Mammary epithelial cell (primary cell): ENCODE measurements at regions of chr7 and their contacts with region 1.

Region 1: GRCh38 chr7:93374345-93374940 is 142.3 kb downstream of the VPS50 start:
- DNase-seq: peak; percentile 20
- H3K4me3 ChIP-seq: no peak overlapping the region
- H3K27ac ChIP-seq: no peak overlapping the region
- H3K4me1 ChIP-seq: no peaks in the 10 kb centered on the region
- H3K27me3 ChIP-seq: peaks cover 2% of the 10 kb centered on the region
- CTCF ChIP-seq: peak; percentile 84 to 92

Region 2: DNA sequence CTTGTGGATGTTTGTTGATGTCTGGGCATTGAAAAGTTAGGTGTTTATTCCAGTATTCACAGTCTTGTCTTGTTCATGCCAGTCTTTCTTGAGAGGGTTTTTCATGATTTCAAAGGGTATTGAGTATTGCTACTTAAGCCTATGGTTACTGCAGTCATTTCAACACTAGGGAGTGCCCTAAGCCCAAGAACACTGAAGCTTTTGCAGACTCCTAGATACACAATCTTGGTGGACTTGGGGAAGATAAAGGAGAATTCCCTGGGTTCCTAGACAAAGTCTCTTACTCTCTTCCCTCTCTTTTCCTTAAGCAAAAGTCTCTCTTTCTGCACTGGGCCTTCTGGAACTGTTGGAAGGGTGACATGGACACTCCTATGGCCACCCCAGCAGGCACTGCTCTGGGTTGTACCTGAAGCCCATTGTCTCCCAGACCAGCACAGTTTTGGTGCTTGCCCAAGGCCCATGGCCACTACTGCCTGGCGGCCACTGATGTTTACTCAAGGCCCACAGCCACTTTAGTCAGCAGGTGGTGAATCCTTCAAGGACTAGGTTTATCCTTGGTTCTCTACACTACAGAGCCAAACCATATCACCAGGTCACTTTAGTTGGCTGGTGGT is 281.6 kb before region 1 on chr7:
- CTCF ChIA-PET with region 1: no interaction called
- dilution Hi-C with region 1: no loop called
- in situ Hi-C with region 1: no loop called
- intact Hi-C with region 1: loop called (anchors 10 kb)
- DNase-seq: peak; percentile 38
- H3K4me3 ChIP-seq: no peak overlapping the region
- H3K27ac ChIP-seq: no peak overlapping the region
- H3K4me1 ChIP-seq: no peaks in the 10 kb centered on the region
- H3K27me3 ChIP-seq: peaks cover 2% of the 10 kb centered on the region
- CTCF ChIP-seq: peak; percentile 62 to 69

Region 3: DNA sequence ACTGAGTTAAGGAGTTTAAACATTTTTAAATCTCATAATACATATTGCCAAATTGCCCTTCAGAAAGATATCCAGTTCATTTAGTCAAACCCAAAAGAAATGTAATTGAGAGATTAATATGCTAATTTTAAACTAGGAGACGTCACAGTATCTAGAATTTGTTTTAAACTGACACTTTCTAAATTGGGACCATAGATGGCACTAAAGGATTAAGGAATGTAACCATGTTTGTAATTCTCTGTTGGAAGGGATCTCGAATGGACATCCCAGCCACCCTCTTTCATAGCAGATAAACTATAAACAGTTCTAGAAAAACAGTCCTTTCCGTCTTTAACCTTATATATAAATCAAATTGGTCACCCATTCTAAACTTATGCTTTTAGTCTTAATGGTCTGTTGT is 196.2 kb before region 1 on chr7:
- CTCF ChIA-PET with region 1: no interaction called
- dilution Hi-C with region 1: no loop called
- in situ Hi-C with region 1: no loop called
- intact Hi-C with region 1: loop called (anchors 2 kb)
- DNase-seq: no peak
- H3K4me3 ChIP-seq: no peak overlapping the region
- H3K27ac ChIP-seq: no peak overlapping the region
- H3K4me1 ChIP-seq: no peaks in the 10 kb centered on the region
- H3K27me3 ChIP-seq: peaks cover 6% of the 10 kb centered on the region
- CTCF ChIP-seq: peak; percentile 34 to 40

Region 4: DNA sequence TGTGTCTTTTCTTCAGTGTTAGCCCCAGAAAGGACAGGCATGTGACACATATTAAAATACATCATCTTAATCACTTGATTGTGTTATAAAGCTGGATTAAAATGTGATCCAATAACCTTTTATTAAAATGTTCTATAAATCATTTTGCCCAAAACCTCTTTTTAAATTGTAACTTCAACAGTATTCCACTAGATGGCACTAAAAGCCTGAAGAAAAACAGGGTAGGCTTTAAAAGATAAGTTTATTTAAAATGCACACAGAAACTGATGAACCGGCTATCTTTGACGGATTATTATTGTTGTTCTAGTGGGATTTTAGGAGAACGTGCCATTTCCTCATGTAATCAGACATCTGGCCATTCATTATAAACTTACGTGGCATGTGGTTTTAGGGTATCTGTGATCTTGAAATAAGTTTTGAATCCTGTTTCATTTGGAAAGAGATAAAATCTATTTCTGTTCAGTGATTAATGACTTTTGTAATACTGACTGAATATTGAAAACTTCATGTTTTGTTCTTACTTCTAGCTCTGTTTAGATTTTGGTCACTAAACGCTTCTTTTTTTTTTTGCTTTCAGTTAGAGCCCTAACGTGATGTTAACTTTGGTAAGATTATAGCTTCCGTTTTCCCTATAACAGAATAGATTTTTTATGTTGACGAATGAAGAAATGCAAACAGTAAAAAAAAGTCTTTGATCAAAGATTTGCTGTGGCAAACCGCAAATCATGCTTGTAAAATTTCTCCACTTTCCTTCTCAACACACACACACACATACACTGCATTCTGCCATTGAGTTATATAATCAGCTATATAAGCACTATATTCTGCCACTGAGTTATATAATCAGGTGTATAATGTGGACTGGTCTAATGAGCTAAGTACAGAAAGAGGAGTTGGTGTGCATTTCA is 128.7 kb before region 1 on chr7:
- CTCF ChIA-PET with region 1: interaction called, 3 read pairs
- dilution Hi-C with region 1: no loop called
- in situ Hi-C with region 1: loop called in 1 of 2 experiments (anchors 25 kb)
- intact Hi-C with region 1: loop called (anchors 1 kb)
- DNase-seq: peak; percentile 6
- H3K4me3 ChIP-seq: no peak overlapping the region
- H3K27ac ChIP-seq: no peak overlapping the region
- H3K4me1 ChIP-seq: no peaks in the 10 kb centered on the region
- H3K27me3 ChIP-seq: no peaks in the 10 kb centered on the region
- CTCF ChIP-seq: peak; percentile 46 to 52

Region 5: GRCh38 chr7:93359520-93360198 is 14.8 kb before region 1 on chr7:
- CTCF ChIA-PET with region 1: interaction called, 13 read pairs
- dilution Hi-C with region 1: no loop called
- in situ Hi-C with region 1: no loop called
- intact Hi-C with region 1: no loop called
- DNase-seq: no peak
- H3K4me3 ChIP-seq: no peak overlapping the region
- H3K27ac ChIP-seq: no peak overlapping the region
- H3K4me1 ChIP-seq: no peaks in the 10 kb centered on the region
- H3K27me3 ChIP-seq: no peaks in the 10 kb centered on the region
- CTCF ChIP-seq: no peak

Region 6: DNA sequence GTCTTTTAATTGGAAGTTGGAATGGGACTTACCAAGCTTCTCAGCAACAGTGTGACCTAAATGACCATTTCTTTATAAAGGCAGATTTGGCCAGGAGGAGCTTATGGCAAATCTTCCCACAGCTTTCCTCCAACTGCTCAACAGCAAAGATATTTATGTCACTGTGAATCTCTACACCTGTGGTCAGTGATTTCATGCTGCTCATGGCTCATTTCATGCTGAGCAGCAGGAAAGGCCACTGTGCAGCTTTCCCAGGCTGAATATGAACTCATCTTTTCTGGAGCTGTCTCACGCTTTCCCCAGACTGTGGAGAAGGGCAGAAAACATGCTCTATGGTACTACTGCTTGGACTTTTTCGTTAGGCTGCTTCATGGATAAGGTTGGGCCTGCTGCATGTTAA is 170.2 kb after region 1 on chr7:
- CTCF ChIA-PET with region 1: no interaction called
- dilution Hi-C with region 1: no loop called
- in situ Hi-C with region 1: no loop called
- intact Hi-C with region 1: loop called (anchors 5 kb)
- DNase-seq: no peak
- H3K4me3 ChIP-seq: no peak overlapping the region
- H3K27ac ChIP-seq: no peak overlapping the region
- H3K4me1 ChIP-seq: no peaks in the 10 kb centered on the region
- H3K27me3 ChIP-seq: peaks cover 4% of the 10 kb centered on the region
- CTCF ChIP-seq: no peak